HEK293 (cell line): ENCODE measurements at regions of chr6 and their contacts with region 1.

Region 1: DNA sequence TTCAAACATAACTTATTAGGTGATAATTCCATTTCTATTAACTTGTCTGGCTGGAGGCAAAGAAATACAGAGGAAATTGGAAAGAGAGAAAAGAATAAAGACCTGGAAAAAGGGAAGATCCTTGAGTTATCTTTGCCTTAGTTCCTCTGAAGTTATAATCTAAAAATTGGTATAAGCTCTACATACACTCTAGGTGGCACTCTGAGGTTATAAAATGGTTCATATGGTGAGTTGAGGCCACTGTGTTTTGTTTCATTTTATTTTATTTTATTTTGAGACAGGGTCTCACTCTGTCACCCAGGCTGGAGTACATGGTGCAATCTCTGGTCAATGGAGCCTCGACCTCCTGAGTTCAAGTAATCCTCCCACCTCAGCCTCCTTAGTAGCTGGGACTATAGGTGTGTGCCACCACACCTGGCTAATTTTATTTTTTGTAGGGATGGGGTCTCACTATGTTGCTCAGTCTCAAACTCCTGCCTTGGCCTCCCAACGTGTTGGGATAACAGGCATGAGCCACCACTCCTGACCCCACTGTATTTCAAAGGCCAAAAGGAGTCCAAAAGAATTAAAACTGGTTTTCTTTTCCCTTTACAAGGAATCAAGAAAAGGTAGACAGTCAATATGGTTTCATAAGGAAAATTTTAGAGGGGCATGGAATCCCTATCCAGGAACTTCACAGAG is 19.4 kb downstream of the GPX6 start:
- H3K4me3 ChIP-seq: no peak overlapping the region
- H3K27ac ChIP-seq: no peak overlapping the region
- H3K4me1 ChIP-seq: no peaks in the 10 kb centered on the region
- CTCF ChIP-seq: no peak

Region 2: GRCh38 chr6:28218271-28219248 is 277.7 kb before region 1 on chr6:
- CTCF ChIA-PET with region 1: no interaction called
- POLR2A ChIA-PET with region 1: no interaction called
- H3K4me3 ChIP-seq: peak overlapping the region; percentile 67
- H3K27ac ChIP-seq: peak overlapping the region; percentile 63; the same call in 1 of the 2 replicates
- H3K4me1 ChIP-seq: no peaks in the 10 kb centered on the region; the same call in 1 of the 2 replicates
- CTCF ChIP-seq: no peak

Region 3: DNA sequence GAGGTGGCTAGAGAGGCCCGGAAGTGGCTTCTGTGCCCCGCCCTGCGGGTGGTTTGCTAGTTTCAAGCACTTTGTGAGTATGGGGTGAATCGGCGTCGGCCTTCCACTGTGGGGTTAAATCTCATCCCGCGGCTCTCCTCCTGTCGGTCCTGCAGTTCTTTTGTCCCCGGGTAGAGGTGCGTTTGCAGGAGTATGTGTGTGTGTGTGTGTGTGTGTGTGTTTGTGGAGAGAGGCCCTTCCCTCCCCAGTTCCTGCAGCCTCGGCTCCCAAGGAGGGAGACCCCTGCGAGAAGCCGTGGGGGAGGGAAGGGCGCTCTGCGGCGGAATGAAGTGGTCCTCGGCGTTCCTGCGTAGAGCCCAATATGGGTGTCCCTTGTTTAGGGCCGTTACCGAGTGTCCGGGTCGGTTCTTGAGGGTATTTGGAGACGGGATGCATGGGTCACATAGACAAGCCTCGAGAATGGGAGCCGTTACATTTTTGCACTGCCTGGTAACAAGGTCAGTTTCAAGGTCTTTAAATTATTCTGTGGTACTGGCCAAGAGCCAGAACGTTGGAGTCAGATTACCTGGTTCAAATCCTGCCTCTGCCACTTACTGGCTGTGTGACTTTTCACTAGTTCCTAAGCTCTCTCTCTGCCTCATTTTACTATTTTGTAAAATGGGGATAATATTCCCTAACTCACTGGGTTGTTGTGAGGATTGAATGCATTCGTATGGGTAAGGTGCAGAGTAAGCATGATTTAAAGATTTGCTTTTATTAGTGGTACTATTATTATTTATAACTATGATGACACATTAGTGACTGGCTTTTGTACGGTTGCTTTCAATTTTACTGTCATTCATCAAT is 146.1 kb before region 1 on chr6 and contains the start of gene ZKSCAN3:
- CTCF ChIA-PET with region 1: no interaction called
- POLR2A ChIA-PET with region 1: no interaction called
- H3K4me3 ChIP-seq: peak within 1 kb of the TSS; percentile 52
- H3K27ac ChIP-seq: peak within 1 kb of the TSS; percentile 69
- H3K4me1 ChIP-seq: peaks cover 4% of the 10 kb centered on the region; the same call in 1 of the 2 replicates
- CTCF ChIP-seq: peak; percentile 58; the same call in 1 of the 2 replicates

Region 4: GRCh38 chr6:28580475-28580874 is 84.2 kb after region 1 on chr6:
- CTCF ChIA-PET with region 1: interaction called, 21 read pairs
- POLR2A ChIA-PET with region 1: interaction called, 3 read pairs
- H3K4me3 ChIP-seq: no peak overlapping the region
- H3K27ac ChIP-seq: no peak overlapping the region
- H3K4me1 ChIP-seq: peaks cover 3% of the 10 kb centered on the region; the same call in 1 of the 2 replicates
- CTCF ChIP-seq: no peak